ENCODE measurements at regions of chr5 and their contacts with region 1.

Region 1: GRCh38 chr5:112551419-112552032 is 132.4 kb upstream of the EPB41L4A start:
- DNase-seq: no peak
- H3K4me3 ChIP-seq: no peak overlapping the region
- H3K27ac ChIP-seq: no peak overlapping the region
- H3K4me1 ChIP-seq: no peaks in the 10 kb centered on the region
- H3K27me3 ChIP-seq: no peaks in the 10 kb centered on the region
- CTCF ChIP-seq: peak; percentile 27 to 82 (median 67)
- POLR2A ChIP-seq: no peak

Region 2: DNA sequence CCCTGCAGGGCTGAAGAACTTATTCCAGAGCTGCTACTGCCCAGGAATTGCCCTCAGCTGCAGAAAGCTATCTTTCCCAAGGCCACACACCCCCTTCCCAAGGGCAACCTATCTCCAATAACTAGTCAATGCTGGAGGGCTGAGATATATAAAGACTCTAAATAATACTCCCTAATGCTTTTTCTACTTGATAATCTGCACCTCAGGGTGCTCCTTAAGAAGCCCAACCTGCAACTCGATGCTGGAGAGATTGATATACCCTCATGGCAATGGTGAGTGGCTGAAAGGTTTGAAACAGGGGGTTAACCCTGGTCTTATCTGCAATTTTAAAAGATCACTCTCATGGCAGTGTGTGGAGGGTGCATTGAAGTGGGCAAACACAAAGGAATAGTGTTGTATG is 43.4 kb after region 1 on chr5:
- intact Hi-C with region 1: no loop called
- DNase-seq: no peak
- H3K4me3 ChIP-seq: no peak overlapping the region
- H3K27ac ChIP-seq: no peak overlapping the region
- H3K4me1 ChIP-seq: peaks cover 0 to 10% (median 8%) of the 10 kb centered on the region in 3 donors
- H3K27me3 ChIP-seq: peaks cover 0 to 30% (median 0%) of the 10 kb centered on the region in 4 donors
- CTCF ChIP-seq: no peak
- POLR2A ChIP-seq: no peak

Region 3: GRCh38 chr5:112757468-112758208 is 206.1 kb after region 1 on chr5:
- intact Hi-C with region 1: loop called (anchors 5 kb)
- DNase-seq: no peak
- H3K4me3 ChIP-seq: peak overlapping the region in 1 of 4 donors; percentile 19
- H3K27ac ChIP-seq: peak overlapping the region in 1 of 4 donors; percentile 31
- H3K4me1 ChIP-seq: peaks cover 0 to 10% (median 0%) of the 10 kb centered on the region in 3 donors
- H3K27me3 ChIP-seq: no peaks in the 10 kb centered on the region
- CTCF ChIP-seq: peak; percentile 41 to 88 (median 80)
- POLR2A ChIP-seq: no peak

Region 4: GRCh38 chr5:112848116-112848811 is 296.7 kb after region 1 on chr5:
- intact Hi-C with region 1: loop called (anchors 10 kb)
- DNase-seq: no peak
- H3K4me3 ChIP-seq: no peak overlapping the region
- H3K27ac ChIP-seq: no peak overlapping the region
- H3K4me1 ChIP-seq: no peaks in the 10 kb centered on the region
- H3K27me3 ChIP-seq: no peaks in the 10 kb centered on the region
- CTCF ChIP-seq: peak; percentile 5 to 64 (median 50)
- POLR2A ChIP-seq: no peak

Region 5: GRCh38 chr5:112921833-112922817 is 370.6 kb after region 1 on chr5 and contains the start of gene REEP5:
- intact Hi-C with region 1: loop called (anchors 10 kb)
- DNase-seq: peak; percentile 66
- H3K4me3 ChIP-seq: peak within 1 kb of the TSS; percentile 82 to 99 (median 94)
- H3K27ac ChIP-seq: peak within 1 kb of the TSS; percentile 92 to 98 (median 96)
- H3K4me1 ChIP-seq: peaks cover 11 to 53% (median 25%) of the 10 kb centered on the region in 3 donors
- H3K27me3 ChIP-seq: no peaks in the 10 kb centered on the region
- CTCF ChIP-seq: peak; percentile 36 to 89 (median 74)
- POLR2A ChIP-seq: peak in 3 of 4 donors; percentile 20 to 89 (median 87)
- total RNA-seq, gene REEP5: 25.5 to 60.8 (median 36.1) TPM